ENCODE measurements at regions of chr7 and their contacts with region 1.

Region 1: GRCh38 chr7:127392566-127393367 is at the start of gene ZNF800:
- DNase-seq: peak; percentile 86 to 90 (median 87)
- H3K4me3 ChIP-seq: peak within 1 kb of the TSS; percentile 77 to 94
- H3K4me3 Mint-ChIP-seq: peak within 1 kb of the TSS; percentile 97 to 100 (median 99)
- H3K27ac ChIP-seq: peak within 1 kb of the TSS; percentile 90
- H3K27ac Mint-ChIP-seq: peak within 1 kb of the TSS; percentile 98 to 99 (median 99)
- H3K4me1 ChIP-seq: peaks cover 46% of the 10 kb centered on the region
- H3K4me1 Mint-ChIP-seq: peaks cover 35 to 60% (median 44%) of the 10 kb centered on the region in 4 donors
- H3K27me3 ChIP-seq: no peaks in the 10 kb centered on the region
- H3K27me3 Mint-ChIP-seq: no peaks in the 10 kb centered on the region
- total RNA-seq, gene ZNF800: 61.3 to 63.3 TPM

Region 2: DNA sequence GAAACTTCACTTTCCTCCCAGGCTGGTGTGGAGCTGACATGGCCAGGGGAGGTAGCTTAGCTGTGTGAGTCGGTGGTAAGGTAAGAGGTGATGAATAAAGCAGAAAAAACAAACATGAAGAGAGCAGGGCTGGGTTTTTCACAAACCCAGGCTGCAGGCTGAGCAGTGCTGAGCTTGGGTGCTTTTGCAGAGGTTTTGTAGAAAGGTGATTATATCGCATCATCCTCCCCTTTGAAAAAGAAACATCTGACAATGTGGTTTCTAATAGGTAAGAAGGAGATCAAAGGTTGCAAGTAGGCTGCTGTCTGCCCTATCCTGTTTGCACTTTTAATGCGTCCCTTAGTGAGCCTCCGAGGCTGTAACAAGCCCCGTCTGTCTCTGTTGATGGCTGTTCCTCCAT is 70.4 kb before region 1 on chr7:
- CTCF ChIA-PET with region 1: no interaction called
- POLR2A ChIA-PET with region 1: interaction called, 10 read pairs
- intact Hi-C with region 1: loop called (anchors 2 kb)
- DNase-seq: peak; percentile 37 to 67 (median 62)
- H3K4me3 ChIP-seq: no peak overlapping the region
- H3K4me3 Mint-ChIP-seq: peak overlapping the region; percentile 46 to 68 (median 60)
- H3K27ac ChIP-seq: no peak overlapping the region
- H3K27ac Mint-ChIP-seq: peak overlapping the region; percentile 9 to 87 (median 76)
- H3K4me1 ChIP-seq: peaks cover 25% of the 10 kb centered on the region
- H3K4me1 Mint-ChIP-seq: peaks cover 18 to 31% (median 26%) of the 10 kb centered on the region in 4 donors
- H3K27me3 ChIP-seq: no peaks in the 10 kb centered on the region
- H3K27me3 Mint-ChIP-seq: peaks cover 0 to 4% of the 10 kb centered on the region in 2 donors

Region 3: GRCh38 chr7:127353897-127354296 is 38.9 kb before region 1 on chr7:
- CTCF ChIA-PET with region 1: interaction called, 14 read pairs
- POLR2A ChIA-PET with region 1: interaction called, 37 read pairs
- intact Hi-C with region 1: loop called (anchors 5 kb)
- DNase-seq: no peak
- H3K4me3 ChIP-seq: no peak overlapping the region
- H3K4me3 Mint-ChIP-seq: no peak overlapping the region
- H3K27ac ChIP-seq: no peak overlapping the region
- H3K27ac Mint-ChIP-seq: no peak overlapping the region
- H3K4me1 ChIP-seq: no peaks in the 10 kb centered on the region
- H3K4me1 Mint-ChIP-seq: peaks cover 8 to 18% (median 15%) of the 10 kb centered on the region in 4 donors
- H3K27me3 ChIP-seq: no peaks in the 10 kb centered on the region
- H3K27me3 Mint-ChIP-seq: no peaks in the 10 kb centered on the region

Region 4: DNA sequence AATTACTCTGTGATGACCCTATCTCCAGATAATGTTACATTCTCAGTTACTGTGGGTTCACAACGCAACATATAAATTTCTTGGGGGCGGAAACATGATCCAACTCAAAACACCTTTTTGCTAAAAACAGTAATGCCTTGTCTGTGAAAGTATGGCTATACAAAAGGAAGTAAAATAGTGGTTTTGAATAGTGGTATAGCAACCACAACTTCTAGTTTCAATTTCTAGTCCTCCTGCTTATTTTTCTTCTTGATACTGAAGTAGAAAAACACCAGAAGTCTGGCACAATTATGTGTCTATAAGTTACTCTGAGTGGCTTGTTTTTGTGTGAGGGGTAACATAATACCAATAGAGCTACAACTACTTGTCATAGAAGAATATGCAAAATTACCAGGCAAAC is 21.2 kb after region 1 on chr7:
- CTCF ChIA-PET with region 1: interaction called, 4 read pairs
- POLR2A ChIA-PET with region 1: interaction called, 81 read pairs
- intact Hi-C with region 1: loop called (anchors 1 kb)
- DNase-seq: peak in 4 of 5 donors; percentile 49 to 66 (median 56)
- H3K4me3 ChIP-seq: no peak overlapping the region
- H3K4me3 Mint-ChIP-seq: peak overlapping the region; percentile 3 to 83 (median 54)
- H3K27ac ChIP-seq: peak overlapping the region; percentile 37
- H3K27ac Mint-ChIP-seq: peak overlapping the region; percentile 79 to 93 (median 93)
- H3K4me1 ChIP-seq: peaks cover 34% of the 10 kb centered on the region
- H3K4me1 Mint-ChIP-seq: peaks cover 35 to 51% (median 39%) of the 10 kb centered on the region in 4 donors
- H3K27me3 ChIP-seq: no peaks in the 10 kb centered on the region
- H3K27me3 Mint-ChIP-seq: no peaks in the 10 kb centered on the region

Region 5: GRCh38 chr7:127514499-127514898 is 121.7 kb after region 1 on chr7:
- CTCF ChIA-PET with region 1: interaction called, 4 read pairs
- POLR2A ChIA-PET with region 1: no interaction called
- intact Hi-C with region 1: loop called (anchors 5 kb)
- DNase-seq: peak in 4 of 5 donors; percentile 22 to 44 (median 36)
- H3K4me3 ChIP-seq: no peak overlapping the region
- H3K4me3 Mint-ChIP-seq: no peak overlapping the region
- H3K27ac ChIP-seq: no peak overlapping the region
- H3K27ac Mint-ChIP-seq: no peak overlapping the region
- H3K4me1 ChIP-seq: no peaks in the 10 kb centered on the region
- H3K4me1 Mint-ChIP-seq: no peaks in the 10 kb centered on the region
- H3K27me3 ChIP-seq: no peaks in the 10 kb centered on the region
- H3K27me3 Mint-ChIP-seq: peaks cover 27 to 28% of the 10 kb centered on the region in 2 donors

Region 6: GRCh38 chr7:127651556-127652332 is 259.0 kb after region 1 on chr7 and contains the start of gene SND1:
- CTCF ChIA-PET with region 1: no interaction called
- POLR2A ChIA-PET with region 1: interaction called, 15 read pairs
- intact Hi-C with region 1: loop called (anchors 1 kb)
- DNase-seq: peak; percentile 98 to 100 (median 100)
- H3K4me3 ChIP-seq: peak within 1 kb of the TSS; percentile 89 to 95
- H3K4me3 Mint-ChIP-seq: peak within 1 kb of the TSS; percentile 94 to 99 (median 98)
- H3K27ac ChIP-seq: peak within 1 kb of the TSS; percentile 93
- H3K27ac Mint-ChIP-seq: peak within 1 kb of the TSS in 5 of 7 donors; percentile 99 to 100 (median 100)
- H3K4me1 ChIP-seq: peaks cover 51% of the 10 kb centered on the region
- H3K4me1 Mint-ChIP-seq: peaks cover 32 to 58% (median 47%) of the 10 kb centered on the region in 4 donors
- H3K27me3 ChIP-seq: no peaks in the 10 kb centered on the region
- H3K27me3 Mint-ChIP-seq: no peaks in the 10 kb centered on the region
- total RNA-seq, gene SND1: 206 to 223 TPM